Panc1 (cell line): ENCODE measurements at regions of chr17 and their contacts with region 1.

Region 1: GRCh38 chr17:7687908-7688807 is at the start of gene WRAP53:
- DNase-seq: peak; percentile 92
- ATAC-seq: peak; percentile 90
- H3K4me3 ChIP-seq: peak within 1 kb of the TSS; percentile 91 to 97
- H3K27ac ChIP-seq: peak within 1 kb of the TSS; percentile 92
- H3K4me1 ChIP-seq: peaks cover 9% of the 10 kb centered on the region; the same call in 1 of the 2 replicates
- H3K27me3 ChIP-seq: no peaks in the 10 kb centered on the region
- CTCF ChIP-seq: peak; percentile 99
- total RNA-seq, gene WRAP53: 27.0 TPM

Region 2: GRCh38 chr17:7484067-7484918 is 203.9 kb before region 1 on chr17 and contains the start of gene POLR2A:
- CTCF ChIA-PET with region 1: no interaction called
- POLR2A ChIA-PET with region 1: no interaction called
- in situ Hi-C with region 1: no loop called
- intact Hi-C with region 1: no loop called
- DNase-seq: peak; percentile 92
- ATAC-seq: peak; percentile 82
- H3K4me3 ChIP-seq: peak within 1 kb of the TSS; percentile 91 to 95
- H3K27ac ChIP-seq: peak within 1 kb of the TSS; percentile 99
- H3K4me1 ChIP-seq: peaks cover 35% of the 10 kb centered on the region
- H3K27me3 ChIP-seq: no peaks in the 10 kb centered on the region
- CTCF ChIP-seq: no peak
- total RNA-seq, gene POLR2A: 181 TPM

Region 3: DNA sequence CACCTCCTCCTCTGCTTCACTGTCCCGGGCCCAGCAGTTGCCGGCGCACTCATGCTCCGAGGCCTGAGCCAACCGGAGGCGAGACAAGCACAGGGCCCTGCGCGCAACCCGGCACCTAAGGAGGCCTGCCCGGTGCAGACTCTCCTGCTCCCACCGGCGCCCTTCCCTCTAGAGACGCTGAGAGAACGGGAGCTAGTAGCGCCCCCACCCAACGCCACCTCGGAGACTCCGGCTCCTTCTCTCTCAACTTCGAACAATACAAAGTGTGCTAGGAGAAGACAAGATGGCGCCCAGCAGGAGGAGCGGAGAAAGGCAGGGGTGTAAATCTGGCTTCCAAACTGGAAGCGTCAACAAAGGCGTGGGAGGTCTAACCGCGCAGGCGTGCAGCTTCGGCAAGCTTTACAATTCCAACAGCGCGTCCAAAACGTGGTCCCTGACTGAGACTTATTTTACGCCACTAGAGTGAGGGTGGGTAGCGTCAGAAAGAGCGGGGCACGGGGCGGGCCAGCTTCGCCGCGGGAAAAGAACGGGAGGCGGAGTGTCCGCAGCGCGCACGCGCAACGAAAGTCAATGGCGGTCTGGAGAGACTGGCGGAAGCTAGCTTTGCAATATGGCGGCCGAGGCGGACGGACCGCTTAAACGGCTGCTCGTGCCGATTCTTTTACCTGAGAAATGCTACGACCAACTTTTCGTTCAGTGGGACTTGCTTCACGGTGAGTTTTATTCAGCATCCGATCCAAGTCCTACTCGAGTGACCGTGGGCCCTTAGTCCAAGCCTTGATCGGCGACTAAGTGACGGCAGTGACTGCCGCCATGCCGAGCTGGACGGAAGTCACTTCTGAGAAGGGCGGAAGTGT is 104.7 kb before region 1 on chr17 and contains the start of gene MPDU1:
- CTCF ChIA-PET with region 1: interaction called, 10 read pairs
- POLR2A ChIA-PET with region 1: interaction called, 6 read pairs
- in situ Hi-C with region 1: no loop called
- intact Hi-C with region 1: loop called (anchors 2 kb)
- DNase-seq: peak; percentile 92
- ATAC-seq: peak; percentile 72
- H3K4me3 ChIP-seq: peak within 1 kb of the TSS; percentile 65 to 66
- H3K27ac ChIP-seq: peak within 1 kb of the TSS; percentile 100
- H3K4me1 ChIP-seq: peaks cover 39% of the 10 kb centered on the region
- H3K27me3 ChIP-seq: no peaks in the 10 kb centered on the region
- CTCF ChIP-seq: no peak
- total RNA-seq, gene MPDU1: 47.1 TPM

Region 4: GRCh38 chr17:7782237-7782636 is 94.1 kb after region 1 on chr17:
- CTCF ChIA-PET with region 1: no interaction called
- POLR2A ChIA-PET with region 1: no interaction called
- in situ Hi-C with region 1: no loop called
- intact Hi-C with region 1: no loop called
- DNase-seq: no peak
- ATAC-seq: no peak
- H3K4me3 ChIP-seq: no peak overlapping the region
- H3K27ac ChIP-seq: no peak overlapping the region
- H3K4me1 ChIP-seq: no peaks in the 10 kb centered on the region
- H3K27me3 ChIP-seq: no peaks in the 10 kb centered on the region; the same call in 1 of the 2 replicates
- CTCF ChIP-seq: no peak

Region 5: DNA sequence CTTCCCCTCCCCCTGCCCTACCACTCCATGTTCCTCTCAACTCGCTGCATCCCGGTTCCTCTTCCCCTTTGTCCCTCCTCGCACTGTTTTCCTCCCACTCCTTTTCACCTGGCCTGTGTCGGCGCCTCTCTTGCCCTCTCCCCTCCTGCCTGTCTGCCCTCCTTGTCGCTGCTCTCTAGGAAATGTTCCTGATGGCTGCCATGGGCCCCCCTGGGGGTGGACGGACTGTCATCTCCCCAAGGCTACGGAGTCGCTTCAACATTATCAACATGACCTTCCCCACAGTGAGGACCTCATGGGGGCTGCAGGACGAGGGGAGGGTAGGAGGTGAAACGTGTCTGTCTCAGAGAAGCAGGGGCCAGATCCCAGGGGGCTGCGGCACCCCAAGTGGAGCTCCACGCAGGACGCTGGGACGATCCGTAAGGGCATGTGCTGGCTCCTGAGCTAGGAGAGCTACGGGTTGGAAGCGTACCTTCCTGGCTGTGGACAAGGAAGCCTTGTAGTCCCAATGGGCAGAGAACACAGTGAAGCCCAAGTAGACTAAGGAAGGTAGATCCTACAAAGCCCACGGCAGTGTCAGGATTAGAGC is 106.0 kb after region 1 on chr17:
- CTCF ChIA-PET with region 1: no interaction called
- POLR2A ChIA-PET with region 1: no interaction called
- in situ Hi-C with region 1: no loop called
- intact Hi-C with region 1: no loop called
- DNase-seq: no peak
- ATAC-seq: no peak
- H3K4me3 ChIP-seq: no peak overlapping the region
- H3K27ac ChIP-seq: no peak overlapping the region
- H3K4me1 ChIP-seq: no peaks in the 10 kb centered on the region
- H3K27me3 ChIP-seq: no peaks in the 10 kb centered on the region
- CTCF ChIP-seq: no peak

Region 6: GRCh38 chr17:7809086-7809790 is 121.1 kb after region 1 on chr17:
- CTCF ChIA-PET with region 1: no interaction called
- POLR2A ChIA-PET with region 1: interaction called, 18 read pairs
- in situ Hi-C with region 1: no loop called
- intact Hi-C with region 1: no loop called
- DNase-seq: no peak
- ATAC-seq: no peak
- H3K4me3 ChIP-seq: no peak overlapping the region
- H3K27ac ChIP-seq: no peak overlapping the region
- H3K4me1 ChIP-seq: no peaks in the 10 kb centered on the region
- H3K27me3 ChIP-seq: no peaks in the 10 kb centered on the region
- CTCF ChIP-seq: no peak